ENCODE measurements at regions of chr2 and their contacts with region 1.

Region 1: DNA sequence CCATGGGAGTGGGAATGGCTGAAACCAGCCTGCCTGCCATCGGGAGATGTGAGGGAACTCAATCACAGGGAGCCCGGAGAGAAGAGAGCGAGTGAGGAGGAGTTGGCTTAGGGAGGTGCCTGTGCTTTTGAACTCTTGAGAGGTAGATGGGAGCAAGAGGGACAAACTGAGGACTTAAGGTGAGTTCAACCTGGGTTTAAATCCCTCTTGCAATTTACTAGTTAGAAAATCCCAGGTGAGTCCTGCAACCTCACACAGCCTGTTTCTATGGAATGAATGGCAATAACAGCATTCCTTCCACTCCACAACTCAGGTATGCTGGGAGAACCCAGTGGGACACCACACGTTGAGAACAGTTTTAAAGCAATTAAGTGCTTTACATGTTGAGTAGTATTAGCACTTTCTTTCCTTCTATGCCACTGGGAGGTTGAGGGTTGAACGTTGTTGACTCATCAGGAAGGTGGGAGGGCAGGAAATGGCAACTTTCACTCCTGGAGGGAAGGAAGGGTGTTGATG is 57.3 kb downstream of the VIT start:
- DNase-seq: no peak
- ATAC-seq: no peak
- H3K4me3 ChIP-seq: no peak overlapping the region
- H3K27ac ChIP-seq: no peak overlapping the region
- H3K4me1 ChIP-seq: no peaks in the 10 kb centered on the region
- H3K27me3 ChIP-seq: no peaks in the 10 kb centered on the region; a peak in 1 of 4 replicates
- CTCF ChIP-seq: no peak
- EP300 ChIP-seq: no peak
- POLR2A ChIP-seq: no peak
- RAD21 ChIP-seq: no peak

Region 2: DNA sequence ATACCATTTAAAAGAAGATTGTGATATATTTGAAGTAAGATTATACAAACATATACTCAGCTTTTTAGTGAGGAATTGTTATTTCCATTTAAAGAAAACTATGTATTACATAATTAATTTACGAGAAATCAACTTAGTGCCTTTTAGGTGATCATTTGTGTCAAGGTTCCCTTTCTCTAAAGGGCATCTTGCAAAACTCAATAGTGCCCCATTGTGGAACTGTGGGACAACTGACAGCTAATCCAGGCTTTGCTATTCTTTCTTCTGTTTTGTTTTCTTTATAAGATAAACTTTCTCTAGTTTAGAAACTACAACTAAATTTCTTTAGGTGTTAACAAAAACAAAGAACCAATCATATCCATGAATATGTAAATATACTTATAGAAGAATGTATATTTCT is 81.6 kb before region 1 on chr2:
- CTCF ChIA-PET with region 1: no interaction called
- POLR2A ChIA-PET with region 1: no interaction called
- RAD21 ChIA-PET with region 1: no interaction called
- SMC1A ChIA-PET with region 1: no interaction called
- in situ Hi-C with region 1: no loop called
- intact Hi-C with region 1: no loop called
- DNase-seq: no peak
- ATAC-seq: 0 out of 3 replicates have a peak, but pooled peaks have one; percentile 44
- H3K4me3 ChIP-seq: no peak overlapping the region
- H3K27ac ChIP-seq: no peak overlapping the region
- H3K4me1 ChIP-seq: no peaks in the 10 kb centered on the region
- H3K27me3 ChIP-seq: no peaks in the 10 kb centered on the region
- CTCF ChIP-seq: peak in 2 of 3 experiments; percentile 20 to 25; a peak in 3 of 6 replicates
- EP300 ChIP-seq: no peak
- POLR2A ChIP-seq: no peak
- RAD21 ChIP-seq: peak; percentile 44

Region 3: DNA sequence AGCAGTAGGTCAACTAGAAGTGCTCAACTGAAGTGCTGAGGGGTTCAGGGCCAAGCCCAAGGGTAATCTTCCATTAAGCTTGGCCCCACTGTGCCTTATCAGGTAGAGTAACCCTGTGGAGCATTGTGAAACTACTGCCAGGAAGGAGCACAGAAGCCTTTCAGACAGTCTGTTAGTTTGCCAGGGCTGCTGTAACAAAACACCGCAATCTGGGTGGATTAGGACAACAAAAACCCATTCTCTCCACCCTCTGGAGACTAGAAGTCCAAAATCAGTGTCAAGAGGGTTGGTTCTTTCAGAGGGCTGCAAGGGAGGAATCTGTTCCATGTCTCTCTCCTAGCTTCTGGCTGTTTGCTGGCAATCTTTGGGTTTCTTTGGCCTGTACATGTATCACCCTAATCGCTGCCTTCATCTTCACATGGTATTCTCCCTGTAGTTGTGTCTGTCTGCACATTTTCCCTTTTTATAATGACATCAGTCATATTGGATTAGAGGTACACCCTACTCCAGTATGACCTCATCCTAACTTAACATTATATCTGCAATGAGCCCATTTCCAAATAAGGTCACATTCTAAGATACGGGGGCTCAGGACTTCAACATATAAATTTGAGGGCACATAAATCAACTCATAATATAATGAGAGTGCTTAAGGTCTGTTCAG is 36.0 kb before region 1 on chr2:
- CTCF ChIA-PET with region 1: no interaction called
- POLR2A ChIA-PET with region 1: no interaction called
- RAD21 ChIA-PET with region 1: no interaction called
- SMC1A ChIA-PET with region 1: no interaction called
- in situ Hi-C with region 1: no loop called
- intact Hi-C with region 1: no loop called
- DNase-seq: no peak
- ATAC-seq: no peak
- H3K4me3 ChIP-seq: no peak overlapping the region
- H3K27ac ChIP-seq: no peak overlapping the region
- H3K4me1 ChIP-seq: no peaks in the 10 kb centered on the region
- H3K27me3 ChIP-seq: no peaks in the 10 kb centered on the region
- CTCF ChIP-seq: no peak
- EP300 ChIP-seq: no peak
- POLR2A ChIP-seq: no peak
- RAD21 ChIP-seq: no peak

Region 4: GRCh38 chr2:36770542-36771287 is 17.0 kb after region 1 on chr2:
- CTCF ChIA-PET with region 1: interaction called, 11 read pairs
- POLR2A ChIA-PET with region 1: no interaction called
- RAD21 ChIA-PET with region 1: interaction called, 3 read pairs
- SMC1A ChIA-PET with region 1: interaction called, 3 read pairs
- in situ Hi-C with region 1: no loop called
- intact Hi-C with region 1: no loop called
- DNase-seq: no peak
- ATAC-seq: peak; percentile 89
- H3K4me3 ChIP-seq: no peak overlapping the region
- H3K27ac ChIP-seq: no peak overlapping the region
- H3K4me1 ChIP-seq: no peaks in the 10 kb centered on the region
- H3K27me3 ChIP-seq: no peaks in the 10 kb centered on the region; a peak in 3 of 4 replicates
- CTCF ChIP-seq: peak; percentile 54 to 74 (median 59)
- EP300 ChIP-seq: no peak
- POLR2A ChIP-seq: no peak
- RAD21 ChIP-seq: peak; percentile 21; the same call in 1 of the 2 replicates

Region 5: DNA sequence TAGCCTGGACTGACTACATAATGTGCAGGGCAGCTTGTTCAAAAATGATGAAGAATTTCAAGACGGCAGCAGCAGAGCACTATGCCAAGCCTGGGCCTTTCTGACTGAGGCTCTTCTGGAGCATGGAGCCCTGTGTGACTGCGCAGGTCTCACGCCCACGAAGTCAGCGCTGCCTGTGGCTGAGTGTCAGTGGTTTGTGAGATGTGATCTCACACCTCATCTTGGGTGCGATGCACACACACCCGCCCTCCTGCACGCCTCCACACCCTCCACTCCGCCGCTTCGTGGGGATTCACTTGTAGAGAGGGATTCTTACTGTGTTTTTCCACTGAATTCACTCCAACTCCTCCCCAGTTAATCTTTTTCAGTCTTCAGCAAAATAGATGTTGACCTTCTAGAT is 46.6 kb after region 1 on chr2:
- CTCF ChIA-PET with region 1: no interaction called
- POLR2A ChIA-PET with region 1: no interaction called
- RAD21 ChIA-PET with region 1: no interaction called
- SMC1A ChIA-PET with region 1: no interaction called
- in situ Hi-C with region 1: no loop called
- intact Hi-C with region 1: no loop called
- DNase-seq: no peak
- ATAC-seq: no peak
- H3K4me3 ChIP-seq: no peak overlapping the region
- H3K27ac ChIP-seq: no peak overlapping the region
- H3K4me1 ChIP-seq: no peaks in the 10 kb centered on the region
- H3K27me3 ChIP-seq: peaks cover 0 to 1% of the 10 kb centered on the region in 2 experiments; a peak in 1 of 4 replicates
- CTCF ChIP-seq: no peak
- EP300 ChIP-seq: no peak
- POLR2A ChIP-seq: no peak
- RAD21 ChIP-seq: no peak

Region 6: DNA sequence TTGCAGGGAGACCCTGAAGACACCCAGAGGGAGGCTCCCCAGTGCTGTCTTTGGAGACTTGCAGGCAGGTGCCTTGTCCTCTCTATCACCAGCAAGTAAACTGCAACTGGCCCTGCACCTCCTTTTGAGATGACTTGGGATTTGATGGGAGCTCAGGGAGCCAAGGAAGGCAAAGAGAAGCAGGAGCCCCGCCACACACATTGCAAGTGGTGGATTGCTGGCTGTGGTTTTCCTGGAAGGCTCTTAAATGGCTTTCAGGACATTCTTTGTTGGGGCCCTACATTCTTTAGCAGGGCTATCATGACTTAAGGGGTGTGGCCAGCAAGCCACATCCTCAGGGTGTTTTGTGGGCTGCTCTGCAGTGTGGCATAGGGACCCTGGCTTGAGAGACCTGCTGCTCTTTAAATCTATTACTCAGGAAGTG is 957.6 kb after region 1 on chr2:
- CTCF ChIA-PET with region 1: no interaction called
- POLR2A ChIA-PET with region 1: no interaction called
- RAD21 ChIA-PET with region 1: no interaction called
- SMC1A ChIA-PET with region 1: no interaction called
- in situ Hi-C with region 1: no loop called
- intact Hi-C with region 1: no loop called
- DNase-seq: no peak
- ATAC-seq: peak; percentile 83
- H3K4me3 ChIP-seq: no peak overlapping the region
- H3K27ac ChIP-seq: no peak overlapping the region
- H3K4me1 ChIP-seq: peaks cover 21% of the 10 kb centered on the region
- H3K27me3 ChIP-seq: no peaks in the 10 kb centered on the region
- CTCF ChIP-seq: no peak
- EP300 ChIP-seq: no peak
- POLR2A ChIP-seq: no peak
- RAD21 ChIP-seq: no peak

Measured in GM12878 (cell line).